ENCODE measurements at regions of chr1 and their contacts with region 1.

Region 1: GRCh38 chr1:165928075-165928731 is 100.8 kb downstream of the UCK2 start:
- DNase-seq: peak; percentile 31
- H3K4me3 ChIP-seq: no peak overlapping the region
- H3K27ac ChIP-seq: no peak overlapping the region
- H3K4me1 ChIP-seq: no peaks in the 10 kb centered on the region
- H3K27me3 ChIP-seq: no peaks in the 10 kb centered on the region
- CTCF ChIP-seq: peak; percentile 53 to 66 (median 58)
- EP300 ChIP-seq: no peak
- POLR2A ChIP-seq: no peak

Region 2: GRCh38 chr1:165747632-165748447 is 180.4 kb before region 1 on chr1:
- in situ Hi-C with region 1: no loop called
- intact Hi-C with region 1: no loop called
- DNase-seq: peak; percentile 19
- H3K4me3 ChIP-seq: no peak overlapping the region
- H3K27ac ChIP-seq: peak overlapping the region; percentile 10 to 69 (median 30)
- H3K4me1 ChIP-seq: peaks cover 0 to 17% (median 6%) of the 10 kb centered on the region in 4 donors
- H3K27me3 ChIP-seq: no peaks in the 10 kb centered on the region
- CTCF ChIP-seq: no peak
- EP300 ChIP-seq: no peak
- POLR2A ChIP-seq: no peak

Region 3: GRCh38 chr1:166470014-166470413 is 541.8 kb after region 1 on chr1:
- in situ Hi-C with region 1: loop called in 2 of 4 experiments (anchors 10 to 25 kb)
- intact Hi-C with region 1: loop called (anchors 5 kb)
- DNase-seq: no peak
- H3K4me3 ChIP-seq: no peak overlapping the region
- H3K27ac ChIP-seq: no peak overlapping the region
- H3K4me1 ChIP-seq: no peaks in the 10 kb centered on the region
- H3K27me3 ChIP-seq: no peaks in the 10 kb centered on the region
- CTCF ChIP-seq: no peak
- EP300 ChIP-seq: no peak
- POLR2A ChIP-seq: no peak

Region 4: GRCh38 chr1:167003711-167004110 is 1075.5 kb after region 1 on chr1:
- in situ Hi-C with region 1: no loop called
- intact Hi-C with region 1: no loop called
- DNase-seq: no peak
- H3K4me3 ChIP-seq: no peak overlapping the region
- H3K27ac ChIP-seq: no peak overlapping the region
- H3K4me1 ChIP-seq: no peaks in the 10 kb centered on the region
- H3K27me3 ChIP-seq: no peaks in the 10 kb centered on the region
- CTCF ChIP-seq: no peak
- EP300 ChIP-seq: no peak
- POLR2A ChIP-seq: no peak